A673 (cell line): ENCODE measurements at regions of chr14 and their contacts with region 1.

Region 1: GRCh38 chr14:91177073-91178034 is 63.5 kb downstream of the DGLUCY start:
- DNase-seq: peak; percentile 71
- H3K4me3 ChIP-seq: no peak overlapping the region
- H3K27ac ChIP-seq: no peak overlapping the region
- H3K4me1 ChIP-seq: peaks cover 12% of the 10 kb centered on the region
- H3K27me3 ChIP-seq: no peaks in the 10 kb centered on the region
- CTCF ChIP-seq: peak; percentile 89

Region 2: DNA sequence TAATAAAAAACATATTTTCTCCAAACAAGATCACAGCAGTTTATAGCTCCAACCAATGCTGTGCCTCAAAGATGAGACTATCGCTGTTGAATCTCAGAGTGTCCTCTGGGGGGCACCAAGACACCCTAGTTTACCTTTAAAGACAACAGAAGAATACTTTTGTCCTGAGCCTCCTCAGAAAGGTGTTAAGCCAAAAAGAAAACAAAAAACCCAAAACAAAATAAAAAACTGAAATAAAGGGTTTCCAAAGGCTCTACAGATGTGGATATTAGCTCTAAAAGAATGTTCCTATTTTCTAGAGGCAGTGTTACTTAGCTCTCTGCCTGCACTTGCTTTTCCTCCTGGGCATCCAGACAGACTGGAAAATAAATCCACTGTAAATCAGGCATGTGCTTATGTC is 274.3 kb before region 1 on chr14:
- CTCF ChIA-PET with region 1: interaction called, 41 read pairs
- POLR2A ChIA-PET with region 1: no interaction called
- intact Hi-C with region 1: loop called (anchors 1 kb)
- DNase-seq: peak; percentile 70
- H3K4me3 ChIP-seq: no peak overlapping the region
- H3K27ac ChIP-seq: no peak overlapping the region
- H3K4me1 ChIP-seq: no peaks in the 10 kb centered on the region
- H3K27me3 ChIP-seq: no peaks in the 10 kb centered on the region
- CTCF ChIP-seq: peak; percentile 89

Region 3: DNA sequence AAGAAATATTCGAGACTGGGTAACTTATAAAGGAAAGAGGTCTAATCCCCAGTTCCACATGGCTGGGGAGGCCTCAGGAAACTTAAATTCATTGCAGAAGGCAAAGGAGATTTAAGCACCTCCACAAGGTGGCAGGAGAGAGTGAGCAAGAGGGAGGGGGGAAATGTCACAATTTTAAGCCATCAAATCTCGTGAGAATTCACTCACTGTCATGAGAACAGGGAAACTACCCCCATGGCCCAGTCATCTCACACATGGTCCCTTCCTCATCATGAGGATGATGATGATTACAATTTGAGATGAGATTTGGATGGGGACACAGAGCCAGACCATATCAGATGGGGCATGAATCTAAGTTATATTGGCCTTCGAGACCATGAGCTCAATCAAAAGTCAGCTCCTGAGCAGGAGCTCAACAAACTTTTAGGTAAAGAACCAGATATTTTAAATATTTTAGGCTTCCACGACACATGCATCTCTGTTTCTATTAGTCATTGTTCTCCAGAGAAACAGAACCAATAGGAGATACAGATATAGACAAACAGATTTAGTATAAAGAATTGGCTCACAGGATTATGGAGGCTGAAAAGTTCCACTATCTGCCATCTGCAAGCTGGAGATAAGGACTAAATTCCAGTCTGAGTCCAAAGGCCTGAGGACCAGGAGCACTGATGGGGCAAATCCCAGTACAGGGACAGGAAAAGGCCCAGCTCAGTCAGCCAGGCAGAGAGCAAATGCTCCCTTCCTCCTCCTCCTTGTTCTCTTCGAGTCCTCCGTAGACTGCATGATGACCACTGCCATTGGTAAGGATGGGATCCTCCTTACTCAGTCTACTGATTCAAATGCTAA is 38.6 kb before region 1 on chr14:
- CTCF ChIA-PET with region 1: interaction called, 17 read pairs
- POLR2A ChIA-PET with region 1: no interaction called
- intact Hi-C with region 1: no loop called
- DNase-seq: peak; percentile 78
- H3K4me3 ChIP-seq: no peak overlapping the region
- H3K27ac ChIP-seq: no peak overlapping the region
- H3K4me1 ChIP-seq: peaks cover 38% of the 10 kb centered on the region
- H3K27me3 ChIP-seq: no peaks in the 10 kb centered on the region
- CTCF ChIP-seq: peak; percentile 67

Region 4: GRCh38 chr14:91193069-91193468 is 15.7 kb after region 1 on chr14:
- CTCF ChIA-PET with region 1: interaction called, 10 read pairs
- POLR2A ChIA-PET with region 1: no interaction called
- intact Hi-C with region 1: no loop called
- DNase-seq: no peak
- H3K4me3 ChIP-seq: no peak overlapping the region
- H3K27ac ChIP-seq: no peak overlapping the region
- H3K4me1 ChIP-seq: no peaks in the 10 kb centered on the region
- H3K27me3 ChIP-seq: no peaks in the 10 kb centered on the region
- CTCF ChIP-seq: no peak

Region 5: GRCh38 chr14:91228112-91229004 is 51.0 kb after region 1 on chr14:
- CTCF ChIA-PET with region 1: no interaction called
- POLR2A ChIA-PET with region 1: no interaction called
- intact Hi-C with region 1: no loop called
- DNase-seq: no peak
- H3K4me3 ChIP-seq: no peak overlapping the region
- H3K27ac ChIP-seq: no peak overlapping the region
- H3K4me1 ChIP-seq: no peaks in the 10 kb centered on the region
- H3K27me3 ChIP-seq: no peaks in the 10 kb centered on the region
- CTCF ChIP-seq: no peak

Region 6: GRCh38 chr14:91418387-91419043 is 241.2 kb after region 1 on chr14:
- CTCF ChIA-PET with region 1: interaction called, 5 read pairs
- POLR2A ChIA-PET with region 1: no interaction called
- intact Hi-C with region 1: loop called (anchors 2 kb)
- DNase-seq: peak; percentile 78
- H3K4me3 ChIP-seq: peak overlapping the region; percentile 89
- H3K27ac ChIP-seq: no peak overlapping the region
- H3K4me1 ChIP-seq: peaks cover 17% of the 10 kb centered on the region
- H3K27me3 ChIP-seq: no peaks in the 10 kb centered on the region
- CTCF ChIP-seq: peak; percentile 97